Aorta (tissue), 5 donors: ENCODE measurements at regions of chr6 and their contacts with region 1.

Region 1: GRCh38 chr6:43990627-43991619 is 136.3 kb downstream of the MRPL14 start:
- DNase-seq: peak; percentile 42 to 62
- ATAC-seq: no peak
- H3K4me3 ChIP-seq: no peak overlapping the region
- H3K27ac ChIP-seq: no peak overlapping the region
- H3K4me1 ChIP-seq: no peaks in the 10 kb centered on the region
- H3K27me3 ChIP-seq: no peaks in the 10 kb centered on the region

Region 2: DNA sequence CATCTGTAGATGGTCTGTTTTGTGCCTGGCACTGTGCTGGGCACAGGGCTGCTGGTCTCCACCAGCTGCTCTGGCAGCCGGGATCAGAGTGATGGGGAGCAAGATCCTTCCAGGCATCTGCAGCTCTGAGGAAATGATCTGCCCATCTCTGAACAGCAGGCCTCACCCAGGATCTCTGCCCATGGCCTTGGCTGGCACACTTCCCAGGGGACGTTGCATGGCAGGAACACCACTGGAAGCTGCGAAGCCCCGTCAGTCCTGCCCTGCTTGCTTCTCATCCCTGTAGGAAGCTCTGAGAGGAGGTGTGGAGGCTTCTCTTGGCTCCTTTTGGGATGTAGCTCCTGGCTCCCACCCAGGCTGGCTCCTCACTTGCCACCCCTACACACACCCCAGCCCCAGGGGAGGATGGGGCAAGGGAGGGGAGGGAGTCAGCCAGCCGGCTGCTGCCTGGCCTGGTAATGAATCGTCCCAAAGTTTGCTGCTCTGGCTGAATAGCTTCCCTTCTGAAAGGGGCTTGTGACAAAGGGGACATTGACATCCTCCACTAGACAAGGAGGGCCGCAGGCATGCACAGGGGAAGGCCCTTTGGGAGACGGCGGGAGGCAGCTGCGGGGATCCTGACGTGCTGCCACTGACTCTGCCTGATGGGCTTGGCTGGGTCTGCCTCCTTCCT is 112.0 kb before region 1 on chr6:
- intact Hi-C with region 1: no loop called
- DNase-seq: peak in 1 of 2 donors; percentile 80
- ATAC-seq: no peak
- H3K4me3 ChIP-seq: no peak overlapping the region
- H3K27ac ChIP-seq: no peak overlapping the region
- H3K4me1 ChIP-seq: no peaks in the 10 kb centered on the region
- H3K27me3 ChIP-seq: no peaks in the 10 kb centered on the region

Region 3: GRCh38 chr6:44010411-44011349 is 19.8 kb after region 1 on chr6:
- intact Hi-C with region 1: loop called in 1 of 2 experiments (anchors 1 kb)
- DNase-seq: peak; percentile 56 to 72
- ATAC-seq: no peak
- H3K4me3 ChIP-seq: no peak overlapping the region
- H3K27ac ChIP-seq: no peak overlapping the region
- H3K4me1 ChIP-seq: no peaks in the 10 kb centered on the region
- H3K27me3 ChIP-seq: no peaks in the 10 kb centered on the region